ENCODE measurements at regions of chr9 and their contacts with region 1.

Region 1: GRCh38 chr9:4984621-4985385 is at the start of gene JAK2:
- DNase-seq: peak; percentile 50 to 93 (median 70)
- ATAC-seq: peak; percentile 85
- H3K4me3 ChIP-seq: peak within 1 kb of the TSS; percentile 87
- H3K4me3 Mint-ChIP-seq: peak within 1 kb of the TSS; percentile 94
- H3K27ac ChIP-seq: peak within 1 kb of the TSS; percentile 65 to 85
- H3K27ac Mint-ChIP-seq: peak within 1 kb of the TSS; percentile 79
- H3K4me1 ChIP-seq: peaks cover 33% of the 10 kb centered on the region
- H3K4me1 Mint-ChIP-seq: peaks cover 27% of the 10 kb centered on the region
- H3K27me3 ChIP-seq: no peaks in the 10 kb centered on the region
- H3K27me3 Mint-ChIP-seq: no peaks in the 10 kb centered on the region
- CTCF ChIP-seq: peak; percentile 24
- total RNA-seq, gene JAK2: 7.2 to 7.5 TPM

Region 2: GRCh38 chr9:4315582-4316215 is 669.1 kb before region 1 on chr9:
- CTCF ChIA-PET with region 1: no interaction called
- POLR2A ChIA-PET with region 1: no interaction called
- intact Hi-C with region 1: loop called in 1 of 2 experiments (anchors 5 kb)
- DNase-seq: peak; percentile 52 to 83 (median 64)
- ATAC-seq: peak; percentile 90
- H3K4me3 ChIP-seq: no peak overlapping the region
- H3K4me3 Mint-ChIP-seq: no peak overlapping the region
- H3K27ac ChIP-seq: no peak overlapping the region
- H3K27ac Mint-ChIP-seq: no peak overlapping the region
- H3K4me1 ChIP-seq: no peaks in the 10 kb centered on the region
- H3K4me1 Mint-ChIP-seq: no peaks in the 10 kb centered on the region
- H3K27me3 ChIP-seq: no peaks in the 10 kb centered on the region
- H3K27me3 Mint-ChIP-seq: no peaks in the 10 kb centered on the region
- CTCF ChIP-seq: peak; percentile 78

Region 3: GRCh38 chr9:4555251-4555650 is 429.6 kb before region 1 on chr9:
- CTCF ChIA-PET with region 1: no interaction called
- POLR2A ChIA-PET with region 1: no interaction called
- intact Hi-C with region 1: loop called in 1 of 2 experiments (anchors 5 kb)
- DNase-seq: peak in 10 of 14 experiments; percentile 11 to 64 (median 34)
- ATAC-seq: peak; percentile 80
- H3K4me3 ChIP-seq: no peak overlapping the region
- H3K4me3 Mint-ChIP-seq: peak overlapping the region; percentile 1
- H3K27ac ChIP-seq: no peak overlapping the region
- H3K27ac Mint-ChIP-seq: peak overlapping the region; percentile 52
- H3K4me1 ChIP-seq: peaks cover 27% of the 10 kb centered on the region
- H3K4me1 Mint-ChIP-seq: peaks cover 59% of the 10 kb centered on the region
- H3K27me3 ChIP-seq: no peaks in the 10 kb centered on the region
- H3K27me3 Mint-ChIP-seq: no peaks in the 10 kb centered on the region
- CTCF ChIP-seq: no peak

Region 4: GRCh38 chr9:4679268-4680172 is 305.3 kb before region 1 on chr9 and contains the start of gene CDC37L1:
- CTCF ChIA-PET with region 1: no interaction called
- POLR2A ChIA-PET with region 1: interaction called, 3 read pairs
- intact Hi-C with region 1: loop called in 1 of 2 experiments (anchors 5 kb)
- DNase-seq: peak; percentile 97 to 100 (median 99)
- ATAC-seq: peak; percentile 82
- H3K4me3 ChIP-seq: peak within 1 kb of the TSS; percentile 95
- H3K4me3 Mint-ChIP-seq: no peak within 1 kb of the TSS
- H3K27ac ChIP-seq: peak within 1 kb of the TSS; percentile 95
- H3K27ac Mint-ChIP-seq: no peak within 1 kb of the TSS
- H3K4me1 ChIP-seq: peaks cover 20% of the 10 kb centered on the region
- H3K4me1 Mint-ChIP-seq: peaks cover 17% of the 10 kb centered on the region
- H3K27me3 ChIP-seq: no peaks in the 10 kb centered on the region
- H3K27me3 Mint-ChIP-seq: no peaks in the 10 kb centered on the region
- CTCF ChIP-seq: peak; percentile 74
- total RNA-seq, gene CDC37L1: 49.1 to 53.4 TPM

Region 5: DNA sequence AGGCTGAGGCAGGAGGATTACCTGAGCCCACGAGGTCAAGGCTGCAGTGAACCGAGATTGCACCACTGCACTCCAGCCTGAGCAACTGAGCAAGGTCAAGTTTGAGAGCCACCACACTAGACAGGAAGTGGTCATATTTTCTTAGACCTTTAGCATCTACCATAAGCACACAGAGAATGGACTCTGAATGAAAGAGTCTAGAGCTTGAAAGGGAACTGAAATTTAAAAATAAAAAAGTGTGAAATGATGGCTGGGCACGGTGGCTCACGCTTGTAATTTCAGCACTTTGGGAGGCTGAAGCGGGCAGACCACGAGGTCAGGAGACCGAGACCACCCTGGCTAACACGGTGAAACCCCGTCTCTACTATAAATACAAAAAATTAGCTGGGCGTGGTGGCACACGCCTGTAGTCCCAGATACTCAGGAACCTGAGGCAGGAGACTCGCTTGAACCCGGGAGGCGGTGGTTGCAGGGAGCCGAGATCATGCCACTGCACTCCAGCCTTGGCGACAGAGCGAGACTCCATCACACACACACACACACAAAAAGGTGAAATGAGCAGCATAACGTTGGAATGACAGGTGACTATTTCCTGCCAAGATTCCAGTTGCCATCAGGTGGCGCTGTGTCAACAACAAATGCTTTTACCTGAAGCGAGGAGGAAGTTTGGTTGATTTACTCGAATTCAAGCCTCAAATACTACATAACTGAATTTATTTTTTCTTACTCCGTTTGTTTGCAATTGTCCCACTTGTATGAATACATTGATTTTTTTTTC is 222.5 kb before region 1 on chr9:
- CTCF ChIA-PET with region 1: interaction called, 8 read pairs
- POLR2A ChIA-PET with region 1: no interaction called
- intact Hi-C with region 1: loop called (anchors 1 kb)
- DNase-seq: peak; percentile 71 to 89 (median 78)
- ATAC-seq: peak; percentile 87
- H3K4me3 ChIP-seq: no peak overlapping the region
- H3K4me3 Mint-ChIP-seq: peak overlapping the region; percentile 3
- H3K27ac ChIP-seq: no peak overlapping the region
- H3K27ac Mint-ChIP-seq: no peak overlapping the region
- H3K4me1 ChIP-seq: peaks cover 20% of the 10 kb centered on the region
- H3K4me1 Mint-ChIP-seq: peaks cover 11% of the 10 kb centered on the region
- H3K27me3 ChIP-seq: no peaks in the 10 kb centered on the region
- H3K27me3 Mint-ChIP-seq: no peaks in the 10 kb centered on the region
- CTCF ChIP-seq: peak; percentile 84

Region 6: DNA sequence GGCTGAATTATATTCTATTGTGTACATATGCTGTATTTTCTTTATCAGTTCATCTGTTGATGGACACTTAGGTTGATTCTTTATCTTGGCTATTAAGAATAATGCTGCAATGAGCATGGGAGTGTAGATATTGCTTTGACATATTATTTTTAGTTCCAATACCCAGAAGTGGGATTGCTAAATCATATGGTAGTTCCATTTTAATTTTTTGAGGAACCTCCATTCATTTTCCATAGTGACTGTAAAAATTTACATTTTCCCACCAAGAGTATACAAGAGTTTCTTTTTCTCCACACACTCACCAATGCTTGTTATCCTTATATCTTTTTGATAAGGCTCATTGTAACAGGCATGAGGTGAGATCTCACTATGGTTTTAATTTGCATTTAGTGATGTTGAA is 19.7 kb after region 1 on chr9:
- CTCF ChIA-PET with region 1: no interaction called
- POLR2A ChIA-PET with region 1: no interaction called
- intact Hi-C with region 1: no loop called
- DNase-seq: no peak
- ATAC-seq: no peak
- H3K4me3 ChIP-seq: no peak overlapping the region
- H3K4me3 Mint-ChIP-seq: no peak overlapping the region
- H3K27ac ChIP-seq: no peak overlapping the region
- H3K27ac Mint-ChIP-seq: no peak overlapping the region
- H3K4me1 ChIP-seq: no peaks in the 10 kb centered on the region
- H3K4me1 Mint-ChIP-seq: peaks cover 16% of the 10 kb centered on the region
- H3K27me3 ChIP-seq: no peaks in the 10 kb centered on the region
- H3K27me3 Mint-ChIP-seq: no peaks in the 10 kb centered on the region
- CTCF ChIP-seq: no peak

Region 7: GRCh38 chr9:5593904-5594303 is 609.1 kb after region 1 on chr9:
- CTCF ChIA-PET with region 1: interaction called, 3 read pairs
- POLR2A ChIA-PET with region 1: no interaction called
- intact Hi-C with region 1: loop called in 1 of 2 experiments (anchors 10 kb)
- DNase-seq: peak in 1 of 14 experiments; percentile 18
- ATAC-seq: no peak
- H3K4me3 ChIP-seq: no peak overlapping the region
- H3K4me3 Mint-ChIP-seq: no peak overlapping the region
- H3K27ac ChIP-seq: no peak overlapping the region
- H3K27ac Mint-ChIP-seq: no peak overlapping the region
- H3K4me1 ChIP-seq: no peaks in the 10 kb centered on the region
- H3K4me1 Mint-ChIP-seq: peaks cover 11% of the 10 kb centered on the region
- H3K27me3 ChIP-seq: no peaks in the 10 kb centered on the region
- H3K27me3 Mint-ChIP-seq: no peaks in the 10 kb centered on the region
- CTCF ChIP-seq: no peak